Sciatic nerve (tissue), 2 donors: ENCODE measurements at regions of chr3 and their contacts with region 1.

Region 1: GRCh38 chr3:13647298-13648059 is 98.6 kb downstream of the FBLN2 start:
- DNase-seq: no peak
- ATAC-seq: no peak

Region 2: DNA sequence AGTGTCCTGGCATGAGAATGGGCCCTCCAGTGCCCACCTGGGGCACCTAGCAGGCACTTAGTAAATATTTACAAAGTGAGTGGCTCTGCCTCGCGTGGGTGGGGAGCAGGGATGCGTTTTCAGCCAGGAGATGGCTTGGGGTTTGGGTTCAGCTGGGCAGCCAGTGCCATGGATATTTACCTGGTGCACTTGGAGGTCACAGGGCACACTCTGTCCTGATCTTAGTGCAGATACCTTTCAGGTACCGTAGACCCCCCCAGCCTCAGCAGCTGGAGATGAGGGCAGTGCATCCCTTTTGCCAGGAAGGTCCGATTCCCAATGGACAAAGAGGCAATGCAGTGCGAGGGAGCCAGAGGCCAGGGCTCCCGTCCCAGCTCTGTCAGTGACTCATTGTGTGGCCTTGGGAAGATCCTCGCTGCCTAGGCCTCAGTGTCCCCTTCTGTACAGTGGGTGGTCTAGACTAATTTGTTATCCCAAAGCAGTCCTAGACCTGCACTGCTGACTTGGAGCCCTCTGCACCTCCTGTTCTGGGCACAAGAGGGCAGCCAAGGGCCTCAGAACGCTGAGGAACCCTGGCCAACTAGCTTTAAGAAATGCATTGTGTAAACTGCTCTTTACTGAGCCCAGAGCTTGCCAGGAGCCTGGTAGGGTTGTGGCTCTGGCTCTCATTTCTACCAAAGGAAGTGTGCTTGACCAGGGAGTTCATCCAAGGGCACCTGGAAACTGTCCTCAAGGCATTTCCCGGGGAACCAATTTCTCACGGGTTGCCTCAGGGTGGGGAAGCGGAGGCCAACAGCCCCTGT is 151.4 kb before region 1 on chr3:
- intact Hi-C with region 1: loop called (anchors 2 kb)
- DNase-seq: peak; percentile 88
- ATAC-seq: peak; percentile 91

Region 3: GRCh38 chr3:13528217-13528867 is 119.1 kb before region 1 on chr3:
- intact Hi-C with region 1: no loop called
- DNase-seq: no peak
- ATAC-seq: peak; percentile 45

Region 4: GRCh38 chr3:13600941-13601576 is 46.4 kb before region 1 on chr3:
- intact Hi-C with region 1: no loop called
- DNase-seq: no peak
- ATAC-seq: peak; percentile 29

Region 5: DNA sequence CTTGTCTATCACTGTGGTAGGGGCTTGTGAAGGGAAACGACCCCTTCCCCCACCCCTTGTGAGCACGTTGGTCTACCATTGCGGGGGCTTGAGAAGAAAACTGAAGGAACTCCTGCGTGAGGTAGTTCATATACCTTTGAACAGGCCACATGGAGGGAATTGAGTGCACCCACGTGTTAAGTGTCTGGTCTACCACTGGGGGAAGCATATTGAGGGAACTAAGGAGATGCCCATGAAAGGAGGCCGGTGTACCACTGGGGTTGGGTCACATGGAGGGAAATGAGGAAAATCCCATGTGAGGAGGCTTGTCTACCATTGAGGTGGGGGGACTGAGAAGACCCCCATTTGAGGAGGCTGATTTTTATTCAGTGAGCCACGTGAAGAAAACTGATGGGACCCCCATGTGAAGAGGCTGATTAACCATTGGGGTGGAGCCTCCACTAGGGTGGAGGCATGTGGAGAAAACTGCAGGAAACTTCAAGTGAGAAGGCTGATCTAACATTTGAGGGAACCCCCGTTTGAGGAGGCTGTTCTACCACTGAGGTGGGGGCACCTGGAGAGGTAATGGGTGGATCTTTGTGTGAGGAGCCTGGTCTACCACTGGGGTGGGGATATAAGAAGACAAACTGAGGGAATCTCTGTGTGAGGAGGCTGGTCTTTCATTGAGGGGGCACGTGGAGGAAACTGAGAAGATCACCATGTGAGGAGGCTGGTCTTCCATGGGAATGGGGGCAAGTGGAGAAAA is 64.6 kb after region 1 on chr3:
- intact Hi-C with region 1: no loop called
- DNase-seq: peak; percentile 22
- ATAC-seq: no peak